GM12878 (cell line): ENCODE measurements at regions of chr15 and their contacts with region 1.

Region 1: GRCh38 chr15:94478763-94479162 is 247.4 kb downstream of the MCTP2 start:
- DNase-seq: peak; percentile 1
- ATAC-seq: peak; percentile 79
- H3K4me3 ChIP-seq: no peak overlapping the region
- H3K27ac ChIP-seq: no peak overlapping the region
- H3K4me1 ChIP-seq: no peaks in the 10 kb centered on the region
- H3K27me3 ChIP-seq: no peaks in the 10 kb centered on the region
- CTCF ChIP-seq: no peak
- EP300 ChIP-seq: no peak
- POLR2A ChIP-seq: no peak
- RAD21 ChIP-seq: no peak

Region 2: GRCh38 chr15:94467034-94467433 is 11.7 kb before region 1 on chr15:
- CTCF ChIA-PET with region 1: interaction called, 3 read pairs
- POLR2A ChIA-PET with region 1: no interaction called
- RAD21 ChIA-PET with region 1: no interaction called
- SMC1A ChIA-PET with region 1: interaction called, 11 read pairs
- in situ Hi-C with region 1: no loop called
- intact Hi-C with region 1: no loop called
- DNase-seq: no peak
- ATAC-seq: no peak
- H3K4me3 ChIP-seq: no peak overlapping the region
- H3K27ac ChIP-seq: no peak overlapping the region
- H3K4me1 ChIP-seq: no peaks in the 10 kb centered on the region
- H3K27me3 ChIP-seq: no peaks in the 10 kb centered on the region
- CTCF ChIP-seq: 0 out of 6 replicates have a peak, but pooled peaks of 1 of the 3 experiments have one; percentile 0
- EP300 ChIP-seq: no peak
- POLR2A ChIP-seq: no peak
- RAD21 ChIP-seq: no peak